BJ (cell line): ENCODE measurements at regions of chr20 and their contacts with region 1.

Region 1: DNA sequence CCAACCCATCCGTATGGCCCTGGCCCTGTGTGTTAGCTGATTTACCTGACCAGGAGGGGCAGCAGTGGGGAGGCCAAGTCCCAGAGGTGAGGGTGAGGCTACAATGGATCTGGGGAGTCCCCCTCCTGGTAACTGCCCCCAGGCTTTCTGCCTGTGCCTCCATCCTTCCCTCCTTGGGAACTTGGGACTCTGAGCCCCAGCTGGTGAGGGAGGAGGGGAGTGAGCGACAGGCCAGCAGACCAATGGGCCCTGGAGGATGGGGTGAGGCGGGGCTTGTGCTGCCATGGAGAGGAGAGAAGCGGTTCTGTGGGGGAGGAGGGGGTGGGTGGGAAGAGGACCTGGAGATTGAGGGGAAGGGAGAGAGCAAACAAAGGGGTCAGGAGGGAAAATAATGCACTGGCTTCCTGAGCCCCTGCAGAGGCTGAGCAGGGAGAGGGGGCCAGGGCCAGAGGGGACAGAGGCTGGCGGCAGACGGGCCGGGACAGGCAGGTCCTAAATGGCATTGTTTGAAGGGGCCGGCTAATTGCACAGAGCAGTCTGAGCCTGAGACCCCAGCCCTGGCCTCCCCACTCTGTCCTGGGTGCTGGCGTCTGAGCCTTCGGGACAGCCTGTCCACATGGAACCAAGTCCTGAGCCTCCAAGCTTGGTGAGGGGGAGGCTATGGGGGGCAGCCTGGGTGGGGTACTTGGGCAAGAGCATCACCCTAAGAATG is 17.5 kb downstream of the DNMT3B start:
- DNase-seq: no peak
- H3K4me3 ChIP-seq: no peak overlapping the region
- H3K27me3 ChIP-seq: no peaks in the 10 kb centered on the region
- CTCF ChIP-seq: no peak

Region 2: DNA sequence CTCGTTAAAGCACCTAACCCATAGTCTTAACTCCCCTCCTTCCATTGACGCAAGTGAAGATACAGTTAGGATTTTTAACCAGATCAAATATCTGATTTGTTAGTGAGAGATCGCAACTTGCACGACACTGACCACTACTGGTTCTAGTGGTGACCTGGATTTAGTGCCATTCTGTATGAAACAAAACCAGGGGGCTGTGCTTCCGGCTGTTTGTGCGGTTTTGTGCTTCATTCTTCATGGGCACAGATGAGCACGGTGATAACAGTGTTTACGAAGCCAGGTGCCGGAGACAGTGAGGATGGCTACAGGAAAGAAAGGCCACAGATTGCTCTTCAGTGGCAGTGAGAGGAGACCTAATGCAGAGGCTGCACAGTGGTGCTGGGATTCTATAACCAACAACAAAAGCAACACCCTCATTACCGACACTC is 270.0 kb before region 1 on chr20:
- CTCF ChIA-PET with region 1: no interaction called
- POLR2A ChIA-PET with region 1: no interaction called
- DNase-seq: peak; percentile 39
- H3K4me3 ChIP-seq: no peak overlapping the region
- H3K27me3 ChIP-seq: no peaks in the 10 kb centered on the region
- CTCF ChIP-seq: peak; percentile 37

Region 3: GRCh38 chr20:32664678-32665159 is 114.9 kb before region 1 on chr20:
- CTCF ChIA-PET with region 1: interaction called, 36 read pairs
- POLR2A ChIA-PET with region 1: no interaction called
- DNase-seq: no peak
- H3K4me3 ChIP-seq: no peak overlapping the region
- H3K27me3 ChIP-seq: no peaks in the 10 kb centered on the region
- CTCF ChIP-seq: no peak

Region 4: DNA sequence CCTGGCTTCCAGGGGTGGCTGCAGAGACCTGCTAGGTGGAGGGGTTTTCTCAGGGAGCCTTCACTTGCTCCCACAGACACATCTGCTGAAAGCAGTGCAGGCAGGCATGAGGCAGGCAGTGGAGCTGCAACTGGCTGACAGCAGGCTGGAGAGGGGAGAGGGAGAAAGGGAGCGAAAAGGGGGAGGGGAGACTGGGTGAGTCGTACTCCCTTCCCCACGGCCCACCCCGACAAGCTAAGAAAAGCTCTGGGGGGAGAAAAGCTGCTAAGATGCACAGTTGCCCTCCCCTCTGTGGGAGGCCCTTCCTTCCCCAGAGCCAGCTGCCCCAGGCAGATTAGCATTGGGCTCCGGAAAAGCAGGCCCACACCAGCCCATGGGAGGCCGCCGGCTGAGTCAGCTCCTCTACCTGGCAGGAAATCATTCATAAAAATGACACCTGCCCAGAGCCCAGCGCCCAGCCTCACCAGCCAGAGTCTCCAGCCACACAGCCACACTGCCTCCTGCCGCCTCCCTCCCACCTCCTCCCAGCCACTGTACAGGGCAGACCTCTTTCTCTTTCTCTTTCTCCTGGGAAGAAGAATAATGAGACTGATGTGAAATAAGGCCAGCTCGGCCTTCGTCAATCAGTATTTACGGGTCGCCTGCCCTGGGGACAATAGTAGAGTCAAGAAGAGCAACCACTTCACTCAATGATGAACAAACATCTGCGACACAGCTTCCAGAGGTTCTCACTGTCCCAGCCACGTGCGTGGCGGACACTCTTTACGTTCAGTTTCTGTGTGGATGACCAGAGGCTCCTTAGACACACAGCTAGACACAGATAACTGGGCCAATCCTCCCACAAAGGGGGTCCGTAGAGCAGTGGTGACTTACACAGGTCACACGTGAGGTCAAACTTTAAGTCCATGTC is 98.2 kb before region 1 on chr20:
- CTCF ChIA-PET with region 1: interaction called, 146 read pairs
- POLR2A ChIA-PET with region 1: interaction called, 4 read pairs
- DNase-seq: no peak
- H3K4me3 ChIP-seq: no peak overlapping the region
- H3K27me3 ChIP-seq: no peaks in the 10 kb centered on the region
- CTCF ChIP-seq: no peak

Region 5: GRCh38 chr20:32762149-32762753 is 17.4 kb before region 1 on chr20 and contains the start of gene DNMT3B:
- CTCF ChIA-PET with region 1: interaction called, 27 read pairs
- POLR2A ChIA-PET with region 1: no interaction called
- DNase-seq: no peak
- H3K4me3 ChIP-seq: peak within 1 kb of the TSS; percentile 95
- H3K27me3 ChIP-seq: no peaks in the 10 kb centered on the region
- CTCF ChIP-seq: 0 out of 2 replicates have a peak, but pooled peaks have one; percentile 1
- polyA plus RNA-seq, gene DNMT3B: 1.1 and 1.3 TPM in 2 replicates

Region 6: DNA sequence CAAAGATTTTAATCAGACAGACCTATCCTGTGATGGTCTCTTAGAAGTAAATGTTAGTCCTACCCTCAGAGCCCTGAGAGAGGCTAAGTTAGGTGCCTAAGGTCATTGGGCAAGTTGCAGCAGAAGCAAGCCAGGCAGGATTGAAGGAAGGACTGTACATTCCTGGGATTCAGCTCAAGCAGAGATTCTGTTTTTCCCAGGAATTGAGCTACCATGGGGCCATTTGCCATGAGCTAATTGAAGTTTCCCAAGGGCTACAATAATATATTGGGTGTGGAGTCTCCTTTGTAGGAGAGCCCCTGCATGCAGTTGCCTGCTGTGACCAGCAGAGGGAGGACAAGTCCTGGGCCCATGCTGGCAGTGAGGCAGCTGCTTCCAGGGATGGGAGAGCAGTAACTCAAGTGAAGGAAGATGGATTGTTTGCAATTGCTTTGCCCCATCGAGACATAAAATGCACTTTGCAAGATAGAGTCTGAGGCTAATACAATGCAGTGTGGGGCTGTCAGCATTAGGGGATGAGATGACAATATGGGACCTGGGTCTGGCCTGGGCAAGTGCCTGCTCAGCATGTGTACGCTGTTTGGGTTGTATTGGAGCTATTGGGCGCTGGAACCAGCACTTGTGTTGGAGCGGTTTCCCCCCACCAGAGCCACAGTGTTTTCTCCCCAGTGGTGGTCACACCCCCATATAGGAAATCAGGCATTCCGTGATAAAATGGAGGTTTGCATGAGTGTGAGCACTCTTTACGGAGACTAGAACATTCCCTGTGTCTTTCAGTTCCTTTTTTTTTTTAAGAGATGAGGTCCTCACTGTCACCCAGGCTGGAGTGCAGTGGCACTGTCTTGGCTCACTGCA is 10.5 kb after region 1 on chr20:
- CTCF ChIA-PET with region 1: interaction called, 31 read pairs
- POLR2A ChIA-PET with region 1: no interaction called
- DNase-seq: no peak
- H3K4me3 ChIP-seq: no peak overlapping the region
- H3K27me3 ChIP-seq: no peaks in the 10 kb centered on the region
- CTCF ChIP-seq: peak; percentile 100